ENCODE measurements at regions of chr2 and their contacts with region 1.

Region 1: DNA sequence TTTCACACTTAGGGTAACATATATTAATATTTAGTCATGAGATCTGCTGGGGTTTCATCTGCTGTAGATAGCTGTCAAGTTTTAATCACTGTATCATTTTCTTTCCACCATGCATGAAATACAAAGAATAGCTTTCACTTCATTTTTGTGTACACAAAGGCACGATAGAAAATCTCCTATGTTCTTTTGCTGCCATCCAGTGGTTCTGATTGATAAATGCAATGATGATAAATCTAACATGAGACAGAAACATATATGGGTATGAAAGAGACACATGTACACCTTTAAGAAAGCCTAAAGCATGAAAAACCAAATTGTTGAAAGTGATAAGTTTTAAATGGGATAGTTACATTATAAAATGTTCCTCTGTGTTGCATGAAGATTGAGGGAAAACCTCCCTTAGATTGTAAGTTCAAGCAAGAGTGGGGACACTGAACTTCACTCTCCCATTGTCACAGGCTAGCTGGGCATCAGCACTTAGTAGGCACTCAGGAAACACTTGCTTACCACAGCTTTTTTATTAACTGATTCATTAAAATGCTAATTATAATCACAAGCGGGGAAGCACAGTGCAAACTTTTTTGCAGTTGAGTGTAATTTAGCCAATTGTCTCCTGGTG is 31.2 kb downstream of the C1D start:
- DNase-seq: peak; percentile 54
- CTCF ChIP-seq: peak; percentile 69

Region 2: GRCh38 chr2:67733517-67733916 is 298.1 kb before region 1 on chr2:
- CTCF ChIA-PET with region 1: interaction called, 23 read pairs
- POLR2A ChIA-PET with region 1: no interaction called
- DNase-seq: peak; percentile 38
- CTCF ChIP-seq: peak; percentile 13

Region 3: GRCh38 chr2:68059784-68060525 is 28.3 kb after region 1 on chr2:
- CTCF ChIA-PET with region 1: interaction called, 11 read pairs
- POLR2A ChIA-PET with region 1: no interaction called
- DNase-seq: no peak
- CTCF ChIP-seq: no peak

Region 4: DNA sequence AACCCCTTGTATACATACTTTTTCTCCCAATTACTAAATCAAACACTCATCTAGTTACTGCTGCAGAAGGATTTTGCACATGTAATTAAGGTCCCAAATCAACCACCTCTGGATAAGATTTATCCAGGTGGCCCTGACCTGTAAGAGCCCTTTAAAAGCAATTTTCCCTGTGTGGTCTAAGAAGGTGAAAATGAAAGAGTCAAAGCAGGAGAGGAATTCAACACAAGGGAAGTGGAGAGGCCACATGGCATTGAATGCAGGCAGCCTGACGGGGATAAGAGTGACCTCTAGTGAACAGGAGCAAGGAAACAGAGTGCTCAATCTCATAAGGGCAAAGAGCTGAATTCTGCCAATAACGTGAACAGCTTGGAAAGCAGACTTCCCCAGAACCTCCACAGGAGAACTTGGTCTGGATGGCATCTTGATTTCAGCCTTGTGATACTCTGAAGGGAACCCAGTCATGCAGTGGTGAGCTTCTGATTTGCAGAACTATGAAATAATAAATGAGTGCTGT is 193.5 kb after region 1 on chr2:
- CTCF ChIA-PET with region 1: no interaction called
- POLR2A ChIA-PET with region 1: no interaction called
- DNase-seq: peak; percentile 22
- CTCF ChIP-seq: peak; percentile 61

Region 5: GRCh38 chr2:68632021-68632420 is 600.4 kb after region 1 on chr2:
- CTCF ChIA-PET with region 1: no interaction called
- POLR2A ChIA-PET with region 1: no interaction called
- DNase-seq: no peak
- CTCF ChIP-seq: no peak

Measured in GM10248 (cell line).